Activated CD4-positive, alpha-beta memory T cell treated with anti-CD3 and anti-CD28 coated beads for 36 hours (primary cell): ENCODE measurements at regions of chr6 and their contacts with region 1.

Region 1: DNA sequence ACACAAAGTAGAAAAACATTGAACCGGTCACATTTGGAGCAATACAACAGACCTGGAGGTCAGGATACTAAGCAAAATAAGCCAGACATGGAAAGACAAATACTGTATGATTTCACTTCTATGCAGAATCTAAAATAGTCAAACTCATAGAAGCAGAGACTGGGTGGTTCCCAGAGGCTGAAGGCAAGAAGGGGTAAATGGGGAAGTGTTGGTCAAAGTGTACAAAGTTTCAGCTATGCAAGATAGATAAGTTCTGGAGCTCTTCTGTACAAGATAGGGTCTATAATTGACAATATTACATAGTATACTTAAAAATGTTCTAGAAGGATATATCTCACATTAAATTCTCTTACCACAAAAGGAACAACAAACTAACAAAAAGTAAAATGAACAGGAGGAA is 70.3 kb downstream of the TMEM244 start:
- DNase-seq: no peak
- H3K4me3 Mint-ChIP-seq: no peak overlapping the region
- H3K27ac Mint-ChIP-seq: no peak overlapping the region
- H3K4me1 Mint-ChIP-seq: no peaks in the 10 kb centered on the region
- H3K27me3 Mint-ChIP-seq: no peaks in the 10 kb centered on the region

Region 2: GRCh38 chr6:129730477-129731165 is 60.2 kb before region 1 on chr6:
- CTCF ChIA-PET with region 1: no interaction called
- POLR2A ChIA-PET with region 1: no interaction called
- intact Hi-C with region 1: no loop called
- DNase-seq: peak; percentile 19
- H3K4me3 Mint-ChIP-seq: no peak overlapping the region
- H3K27ac Mint-ChIP-seq: no peak overlapping the region
- H3K4me1 Mint-ChIP-seq: peaks cover 11% of the 10 kb centered on the region
- H3K27me3 Mint-ChIP-seq: no peaks in the 10 kb centered on the region

Region 3: DNA sequence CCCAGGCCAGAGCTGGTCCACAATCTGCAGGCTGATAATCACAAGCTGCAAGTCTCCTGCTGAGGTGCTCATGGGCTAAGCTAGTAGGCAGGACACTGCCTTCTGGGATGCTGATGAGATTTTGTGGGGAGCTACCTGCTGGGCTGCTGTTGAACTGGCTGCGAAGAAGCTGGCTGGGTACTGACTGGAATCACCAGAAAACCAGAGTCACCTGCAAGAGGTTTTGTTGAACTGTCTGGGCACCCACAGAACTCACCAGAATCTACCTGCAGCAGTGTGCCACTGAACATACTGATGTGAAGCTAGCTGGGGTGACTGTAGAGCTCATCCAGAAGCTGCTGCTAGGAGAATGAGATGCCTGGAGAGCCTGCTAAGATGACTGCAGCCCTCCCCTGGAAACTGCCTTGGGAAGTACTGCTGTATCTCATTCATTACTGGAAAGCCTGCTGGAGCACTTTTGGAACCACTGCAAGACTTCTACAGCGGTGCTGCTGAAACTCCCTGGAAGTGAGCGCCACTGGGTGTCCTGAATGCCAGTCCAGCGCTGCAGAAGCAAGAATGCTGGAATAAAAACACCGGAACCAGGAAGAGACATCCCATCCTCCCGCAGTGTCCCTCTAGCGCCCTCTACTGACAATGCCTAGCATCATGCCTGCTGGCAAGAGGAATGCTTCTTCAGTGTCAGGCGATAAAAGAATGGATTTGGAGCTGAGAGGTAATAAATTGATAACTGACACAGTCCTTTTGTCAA is 15.9 kb before region 1 on chr6:
- CTCF ChIA-PET with region 1: interaction called, 12 read pairs
- POLR2A ChIA-PET with region 1: no interaction called
- intact Hi-C with region 1: no loop called
- DNase-seq: peak; percentile 64
- H3K4me3 Mint-ChIP-seq: no peak overlapping the region
- H3K27ac Mint-ChIP-seq: no peak overlapping the region
- H3K4me1 Mint-ChIP-seq: no peaks in the 10 kb centered on the region
- H3K27me3 Mint-ChIP-seq: no peaks in the 10 kb centered on the region